AG04450 (cell line): ENCODE measurements at regions of chr1 and their contacts with region 1.

Region 1: DNA sequence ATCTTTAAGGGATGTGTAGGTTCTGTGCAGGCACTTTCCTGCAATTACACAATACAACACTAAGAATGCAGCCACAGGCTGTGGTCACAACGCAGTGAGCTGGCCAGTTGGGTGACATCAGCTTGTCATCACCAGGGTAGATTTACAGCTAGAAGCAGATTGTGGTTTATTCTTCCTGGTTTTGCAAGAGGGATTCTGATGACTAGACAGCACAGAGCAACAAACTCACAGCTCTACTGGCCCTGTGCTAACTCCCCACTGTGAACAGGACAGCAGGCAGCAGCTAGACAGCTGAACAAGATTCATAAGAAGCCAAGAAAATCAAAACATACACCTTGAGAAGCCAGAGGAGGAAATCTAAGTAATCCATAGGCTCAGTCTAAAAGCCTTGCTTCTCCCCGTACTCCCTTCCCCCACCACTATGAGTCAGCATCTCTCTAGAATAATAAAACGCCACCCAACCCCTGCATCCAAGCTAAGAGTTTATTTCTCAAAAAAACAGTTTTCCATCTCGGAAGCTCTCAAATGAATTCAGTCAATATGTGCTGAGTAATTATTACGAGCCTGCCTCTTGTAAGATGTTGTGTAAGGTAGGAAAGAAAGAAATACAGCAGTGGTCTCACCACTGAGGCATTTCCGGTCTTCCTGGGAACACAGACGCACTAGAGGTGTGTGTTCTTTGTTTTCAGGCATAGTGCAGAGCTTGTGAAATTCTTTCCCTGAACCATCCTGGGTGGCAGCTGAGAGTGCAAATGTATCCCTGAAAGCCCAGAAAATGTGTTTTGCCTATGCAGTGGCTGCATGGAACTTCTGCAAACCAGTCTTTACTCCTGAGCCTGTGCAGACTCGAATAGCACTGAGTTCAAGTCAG is 162.8 kb downstream of the NTPCR start:
- DNase-seq: peak; percentile 98
- H3K4me3 ChIP-seq: peak overlapping the region; percentile 26; the same call in 1 of the 2 replicates
- H3K27ac ChIP-seq: peak overlapping the region; percentile 99
- H3K27me3 ChIP-seq: no peaks in the 10 kb centered on the region
- CTCF ChIP-seq: no peak

Region 2: DNA sequence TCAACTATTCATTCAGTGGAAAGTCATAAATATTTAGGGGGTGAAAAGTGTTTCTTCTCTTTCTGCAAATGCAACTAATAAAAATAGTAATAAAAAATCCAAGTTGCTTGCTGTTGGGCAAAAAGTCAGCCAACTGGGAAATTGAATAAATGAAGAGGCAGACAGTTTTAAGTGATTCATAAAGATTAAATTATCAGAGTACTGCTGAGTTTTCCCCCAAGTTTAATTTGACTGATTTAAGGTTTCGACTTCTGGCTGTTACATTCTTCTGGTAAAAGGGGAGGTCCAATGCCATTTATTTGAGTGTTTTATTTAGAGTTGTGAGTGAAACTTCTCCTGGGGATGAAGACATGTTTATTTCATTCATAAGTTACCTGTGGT is 37.3 kb before region 1 on chr1:
- CTCF ChIA-PET with region 1: no interaction called
- POLR2A ChIA-PET with region 1: interaction called, 22 read pairs
- DNase-seq: no peak
- H3K4me3 ChIP-seq: no peak overlapping the region
- H3K27ac ChIP-seq: no peak overlapping the region
- H3K27me3 ChIP-seq: no peaks in the 10 kb centered on the region
- CTCF ChIP-seq: no peak

Region 3: DNA sequence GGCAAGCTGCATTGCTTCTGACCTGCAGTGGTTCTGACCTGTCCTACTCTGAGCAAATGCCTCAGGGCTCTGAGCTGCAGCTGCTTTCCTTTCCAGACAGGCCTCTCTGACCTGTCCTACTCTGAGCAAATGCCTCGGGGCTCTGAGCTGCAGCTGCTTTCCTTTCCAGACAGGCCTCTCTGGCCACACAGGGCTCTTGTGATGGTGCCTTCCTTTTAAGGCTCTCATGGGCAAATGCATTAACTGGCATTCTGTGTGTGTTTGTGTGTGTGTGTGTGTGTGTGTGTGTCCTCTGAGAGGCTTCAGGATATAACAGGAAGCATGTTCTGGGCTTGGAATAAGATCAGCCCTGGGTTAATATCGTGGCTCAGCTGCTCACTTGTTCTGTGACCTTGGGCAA is 31.5 kb before region 1 on chr1:
- CTCF ChIA-PET with region 1: no interaction called
- POLR2A ChIA-PET with region 1: interaction called, 10 read pairs
- DNase-seq: no peak
- H3K4me3 ChIP-seq: no peak overlapping the region
- H3K27ac ChIP-seq: no peak overlapping the region
- H3K27me3 ChIP-seq: no peaks in the 10 kb centered on the region
- CTCF ChIP-seq: no peak

Region 4: DNA sequence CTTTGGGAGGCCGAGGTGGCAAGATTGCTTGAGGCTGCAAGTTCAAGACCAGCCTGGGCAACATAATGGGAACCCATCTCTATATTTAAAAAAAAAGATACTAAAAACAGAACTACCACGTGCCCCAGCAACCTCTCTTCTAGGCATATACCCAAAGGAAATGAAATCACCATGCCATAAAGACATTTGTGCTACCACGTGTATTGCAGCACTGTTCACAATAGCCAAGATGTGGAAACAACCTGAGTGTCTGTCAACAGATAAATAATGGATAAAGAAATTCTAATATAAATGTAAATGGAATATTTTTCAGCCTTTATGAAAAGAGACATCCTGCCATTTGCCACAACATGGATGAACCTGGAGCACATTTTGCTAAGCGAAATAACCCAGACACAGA is 53.7 kb after region 1 on chr1:
- CTCF ChIA-PET with region 1: no interaction called
- POLR2A ChIA-PET with region 1: no interaction called
- DNase-seq: no peak
- H3K4me3 ChIP-seq: no peak overlapping the region
- H3K27ac ChIP-seq: no peak overlapping the region
- H3K27me3 ChIP-seq: no peaks in the 10 kb centered on the region
- CTCF ChIP-seq: no peak

Region 5: DNA sequence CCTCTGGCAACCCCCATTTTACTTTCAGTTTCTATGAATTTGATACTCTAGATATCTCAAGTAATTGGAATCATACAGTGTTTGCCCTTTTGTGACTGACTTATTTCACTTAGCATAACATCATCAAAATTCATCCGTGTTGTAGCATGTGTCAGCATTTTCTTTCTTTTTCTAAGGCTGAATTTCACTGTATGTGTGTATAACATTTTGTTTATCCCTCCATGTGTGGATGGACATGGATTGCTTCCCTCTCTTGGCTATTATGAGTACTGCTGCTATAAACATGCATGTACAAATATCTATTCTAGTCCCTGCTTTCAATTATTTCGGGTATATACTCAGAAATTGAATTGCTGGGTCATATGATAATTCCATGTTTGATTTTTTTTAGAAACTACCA is 311.5 kb after region 1 on chr1:
- CTCF ChIA-PET with region 1: no interaction called
- POLR2A ChIA-PET with region 1: no interaction called
- DNase-seq: no peak
- H3K4me3 ChIP-seq: no peak overlapping the region
- H3K27ac ChIP-seq: no peak overlapping the region
- H3K27me3 ChIP-seq: no peaks in the 10 kb centered on the region
- CTCF ChIP-seq: peak; percentile 19; the same call in 1 of the 2 replicates